Natural killer cell (primary cell): ENCODE measurements at regions of chr6 and their contacts with region 1.

Region 1: GRCh38 chr6:116570856-116571682 is at the start of gene RWDD1:
- DNase-seq: peak; percentile 96 to 99
- ATAC-seq: peak; percentile 91 to 99 (median 92)
- H3K4me3 ChIP-seq: peak within 1 kb of the TSS; percentile 66
- H3K4me3 Mint-ChIP-seq: peak within 1 kb of the TSS; percentile 98
- H3K27ac ChIP-seq: peak within 1 kb of the TSS; percentile 88
- H3K27ac Mint-ChIP-seq: peak within 1 kb of the TSS; percentile 99
- H3K4me1 ChIP-seq: peaks cover 4% of the 10 kb centered on the region
- H3K4me1 Mint-ChIP-seq: peaks cover 43 to 44% of the 10 kb centered on the region in 2 donors
- H3K27me3 ChIP-seq: no peaks in the 10 kb centered on the region
- H3K27me3 Mint-ChIP-seq: peaks cover 5 to 10% of the 10 kb centered on the region in 2 donors
- CTCF ChIP-seq: no peak
- total RNA-seq, gene RWDD1: 47.0 to 48.9 (median 47.1) TPM

Region 2: DNA sequence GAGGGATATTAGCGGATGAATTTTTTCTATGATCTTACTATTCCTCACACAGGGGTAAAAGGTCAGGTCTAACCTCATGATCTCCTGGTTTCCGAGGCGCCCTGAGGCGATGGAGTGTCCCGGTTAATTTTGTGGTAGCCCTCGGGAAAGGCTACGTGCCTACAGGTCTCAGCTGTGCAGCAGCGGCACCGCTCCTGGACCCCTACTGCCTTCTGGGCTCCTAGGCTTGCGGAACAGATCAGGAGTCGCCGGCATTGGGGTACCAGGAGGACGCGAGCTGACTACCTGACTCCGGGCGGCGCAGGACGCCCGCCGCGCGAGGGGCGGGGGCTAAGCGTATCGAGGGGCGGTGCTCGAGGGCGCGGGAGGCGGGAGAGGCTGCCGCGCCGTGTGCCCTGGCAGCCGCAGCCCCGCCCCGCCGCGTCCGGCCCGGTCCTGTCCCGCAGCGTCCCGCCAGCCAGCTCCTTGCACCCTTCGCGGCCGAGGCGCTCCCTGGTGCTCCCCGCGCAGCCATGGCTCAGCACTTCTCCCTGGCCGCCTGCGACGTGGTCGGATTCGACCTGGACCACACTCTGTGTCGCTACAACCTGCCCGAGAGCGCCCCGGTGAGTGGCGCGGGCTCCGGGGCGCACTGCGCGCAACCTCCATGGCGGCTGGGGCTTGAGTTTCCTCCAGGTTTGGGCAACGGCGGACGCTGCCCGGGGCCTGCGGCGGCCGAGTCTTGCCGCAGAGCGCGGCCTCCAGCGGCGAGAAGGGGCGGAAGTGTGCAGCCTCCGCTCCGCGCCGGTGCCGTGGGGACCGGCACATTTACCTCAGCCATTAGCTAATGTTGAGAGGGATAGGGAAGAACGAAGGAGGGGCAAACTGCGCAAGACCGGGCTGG is 470.4 kb before region 1 on chr6 and contains the start of gene NT5DC1:
- intact Hi-C with region 1: loop called (anchors 2 kb)
- DNase-seq: peak; percentile 79 to 90
- ATAC-seq: peak; percentile 90 to 95 (median 91)
- H3K4me3 ChIP-seq: peak within 1 kb of the TSS; percentile 64
- H3K4me3 Mint-ChIP-seq: peak within 1 kb of the TSS; percentile 92
- H3K27ac ChIP-seq: peak within 1 kb of the TSS; percentile 81
- H3K27ac Mint-ChIP-seq: peak within 1 kb of the TSS; percentile 76 to 89
- H3K4me1 ChIP-seq: peaks cover 19% of the 10 kb centered on the region
- H3K4me1 Mint-ChIP-seq: peaks cover 31 to 47% of the 10 kb centered on the region in 2 donors
- H3K27me3 ChIP-seq: no peaks in the 10 kb centered on the region
- H3K27me3 Mint-ChIP-seq: no peaks in the 10 kb centered on the region
- CTCF ChIP-seq: peak; percentile 44
- total RNA-seq, gene NT5DC1: 19.1 to 29.4 (median 20.5) TPM

Region 3: GRCh38 chr6:116253505-116254296 is 317.4 kb before region 1 on chr6 and contains the start of gene TSPYL4:
- intact Hi-C with region 1: loop called (anchors 1 kb)
- DNase-seq: peak; percentile 88 to 98
- ATAC-seq: peak; percentile 97 to 99 (median 97)
- H3K4me3 ChIP-seq: peak within 1 kb of the TSS; percentile 94
- H3K4me3 Mint-ChIP-seq: no peak within 1 kb of the TSS
- H3K27ac ChIP-seq: peak within 1 kb of the TSS; percentile 91
- H3K27ac Mint-ChIP-seq: no peak within 1 kb of the TSS
- H3K4me1 ChIP-seq: peaks cover 21% of the 10 kb centered on the region
- H3K4me1 Mint-ChIP-seq: no peaks in the 10 kb centered on the region
- H3K27me3 ChIP-seq: no peaks in the 10 kb centered on the region
- H3K27me3 Mint-ChIP-seq: no peaks in the 10 kb centered on the region
- CTCF ChIP-seq: no peak
- total RNA-seq, gene TSPYL4: 21.5 to 36.8 (median 26.5) TPM

Region 4: DNA sequence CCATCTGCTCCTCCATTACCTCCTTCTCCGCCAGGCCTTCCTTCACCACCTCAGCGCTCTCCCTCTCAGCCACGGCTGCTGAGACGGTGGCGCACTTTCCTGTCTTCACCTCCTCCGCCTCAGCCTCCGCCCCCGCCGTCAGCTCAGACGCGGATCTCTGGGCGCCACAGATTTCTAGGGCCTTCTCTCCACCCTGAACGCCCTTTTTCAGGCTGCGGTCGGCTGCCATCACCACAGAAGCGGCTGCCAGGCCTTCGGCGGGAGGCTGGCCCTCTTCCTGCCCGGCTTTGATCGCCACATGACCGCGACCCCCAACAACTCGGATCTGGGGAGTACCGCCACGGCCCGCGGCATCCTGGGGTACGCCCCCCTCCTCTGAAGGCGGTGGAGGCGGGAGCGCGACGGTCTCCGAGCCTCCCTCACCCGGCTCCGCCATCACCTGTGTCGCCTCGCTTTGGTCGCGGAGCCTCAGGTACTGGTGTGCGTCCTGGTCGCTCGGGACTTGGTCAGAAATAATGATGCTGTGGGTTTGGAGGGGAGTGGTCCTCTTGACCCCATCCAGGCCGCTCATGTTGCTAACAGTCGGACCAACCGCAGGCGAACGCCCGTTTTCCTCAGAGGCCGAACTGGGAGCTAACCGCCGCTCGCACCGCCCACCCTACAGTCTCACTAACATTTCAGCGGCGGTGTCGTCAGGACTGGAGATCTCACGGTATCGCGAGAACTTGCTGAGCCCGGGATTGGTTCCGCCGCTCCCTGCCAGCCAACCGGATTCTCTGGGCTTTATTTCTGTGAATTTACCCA is 291.6 kb before region 1 on chr6 and contains the start of gene TSPYL1:
- intact Hi-C with region 1: loop called (anchors 2 kb)
- DNase-seq: peak; percentile 91 to 98
- ATAC-seq: peak; percentile 88 to 95 (median 89)
- H3K4me3 ChIP-seq: peak within 1 kb of the TSS; percentile 92
- H3K4me3 Mint-ChIP-seq: peak within 1 kb of the TSS; percentile 96
- H3K27ac ChIP-seq: peak within 1 kb of the TSS; percentile 99
- H3K27ac Mint-ChIP-seq: peak within 1 kb of the TSS; percentile 98 to 100
- H3K4me1 ChIP-seq: peaks cover 26% of the 10 kb centered on the region
- H3K4me1 Mint-ChIP-seq: peaks cover 56 to 57% of the 10 kb centered on the region in 2 donors
- H3K27me3 ChIP-seq: no peaks in the 10 kb centered on the region
- H3K27me3 Mint-ChIP-seq: no peaks in the 10 kb centered on the region
- CTCF ChIP-seq: no peak
- total RNA-seq, gene TSPYL1: 134 to 143 (median 142) TPM

Region 5: DNA sequence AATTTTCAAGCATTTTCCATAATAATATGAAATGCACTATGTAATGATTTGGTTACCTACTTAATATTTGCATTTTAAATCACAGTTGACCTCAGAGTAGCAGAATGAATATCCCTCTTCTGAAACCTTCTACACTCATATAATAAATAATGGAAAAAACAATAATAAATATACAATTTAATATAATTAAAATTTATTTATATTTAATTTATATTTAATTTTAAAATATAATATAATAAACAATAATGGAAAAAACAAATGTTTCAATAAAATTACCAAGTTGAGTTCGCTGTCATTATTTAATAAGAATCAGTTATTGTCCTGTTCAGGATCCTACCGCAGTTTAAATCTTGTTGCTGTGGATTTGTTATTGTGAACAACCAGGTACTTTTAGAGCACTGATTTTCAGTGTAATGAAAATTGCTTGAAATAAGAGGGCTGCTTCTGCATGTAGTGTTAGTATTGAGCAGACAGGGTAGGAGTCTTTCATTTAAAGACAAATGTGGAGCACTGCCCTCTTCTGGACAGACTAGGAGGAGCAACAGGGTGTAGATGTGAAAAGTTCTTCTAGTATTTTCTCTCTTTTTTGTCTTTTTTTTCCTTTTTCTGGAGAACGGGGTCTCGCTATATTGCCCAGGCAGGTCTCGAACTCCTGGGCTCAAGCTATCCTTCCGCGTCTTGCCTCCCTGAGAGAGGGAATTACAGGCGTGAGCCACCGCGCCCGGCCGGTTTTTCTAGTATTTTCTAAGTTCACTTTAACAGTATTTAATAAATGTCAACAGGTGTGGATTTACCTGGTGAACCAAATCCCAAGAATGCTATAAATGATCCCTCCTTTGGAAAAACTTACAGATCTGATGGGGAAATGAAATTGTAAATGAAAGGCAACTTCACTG is 39.1 kb before region 1 on chr6:
- intact Hi-C with region 1: loop called (anchors 1 kb)
- DNase-seq: peak; percentile 30 to 82
- ATAC-seq: peak; percentile 95 to 97 (median 97)
- H3K4me3 ChIP-seq: no peak overlapping the region
- H3K4me3 Mint-ChIP-seq: no peak overlapping the region
- H3K27ac ChIP-seq: no peak overlapping the region
- H3K27ac Mint-ChIP-seq: no peak overlapping the region
- H3K4me1 ChIP-seq: no peaks in the 10 kb centered on the region
- H3K4me1 Mint-ChIP-seq: no peaks in the 10 kb centered on the region
- H3K27me3 ChIP-seq: no peaks in the 10 kb centered on the region
- H3K27me3 Mint-ChIP-seq: peaks cover 21 to 42% of the 10 kb centered on the region in 2 donors
- CTCF ChIP-seq: peak; percentile 95

Region 6: GRCh38 chr6:116667623-116668022 is 96.6 kb after region 1 on chr6:
- intact Hi-C with region 1: loop called (anchors 5 kb)
- DNase-seq: peak in 1 of 2 donors; percentile 10
- ATAC-seq: no peak
- H3K4me3 ChIP-seq: peak overlapping the region; percentile 73
- H3K4me3 Mint-ChIP-seq: peak overlapping the region; percentile 97
- H3K27ac ChIP-seq: no peak overlapping the region
- H3K27ac Mint-ChIP-seq: peak overlapping the region; percentile 94 to 97
- H3K4me1 ChIP-seq: peaks cover 11% of the 10 kb centered on the region
- H3K4me1 Mint-ChIP-seq: peaks cover 31% of the 10 kb centered on the region in 2 donors
- H3K27me3 ChIP-seq: no peaks in the 10 kb centered on the region
- H3K27me3 Mint-ChIP-seq: peaks cover 11 to 18% of the 10 kb centered on the region in 2 donors
- CTCF ChIP-seq: no peak

Region 7: DNA sequence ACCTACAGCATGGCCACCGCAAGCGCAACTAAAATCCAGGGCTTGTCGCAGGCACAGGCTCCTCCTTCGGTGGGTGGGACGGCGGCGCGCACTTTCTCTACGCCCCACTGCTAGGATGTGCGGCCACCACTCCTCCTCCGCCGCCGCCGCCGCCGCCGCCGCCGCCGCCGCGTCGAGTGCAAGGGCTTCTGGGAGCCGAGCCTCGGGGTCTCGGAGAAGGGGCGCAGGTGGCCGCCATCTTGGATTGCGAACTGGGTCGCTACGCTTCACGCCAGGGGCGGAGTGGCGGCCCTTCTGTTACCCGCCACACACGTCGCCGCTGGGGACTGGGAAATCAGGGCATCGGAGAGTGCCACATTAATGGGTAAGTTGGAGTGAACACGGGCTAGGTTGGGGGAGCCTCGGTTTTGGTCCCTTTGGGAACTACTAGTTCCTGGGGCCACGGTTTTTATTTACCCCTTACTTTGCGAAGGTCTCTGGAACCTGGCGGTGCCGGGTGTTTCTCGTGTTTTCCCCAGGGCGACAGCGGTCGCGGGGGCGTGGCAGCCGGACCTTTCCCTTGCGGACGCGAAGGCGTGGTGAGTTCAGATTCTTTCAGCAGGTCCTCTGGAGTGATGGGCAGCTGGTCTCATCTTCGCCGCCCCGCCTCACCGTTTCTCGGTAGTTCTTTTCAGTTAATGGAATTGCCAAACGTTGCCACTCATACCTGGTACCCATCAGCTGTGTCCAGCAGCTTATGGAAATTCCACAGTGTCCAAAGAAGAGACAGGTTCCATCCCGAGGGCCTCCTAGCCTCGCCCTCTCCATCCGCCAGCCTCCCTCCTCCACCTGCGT is 110.1 kb after region 1 on chr6 and contains the start of gene KPNA5:
- intact Hi-C with region 1: loop called (anchors 2 kb)
- DNase-seq: peak; percentile 81 to 94
- ATAC-seq: peak; percentile 91 to 97 (median 93)
- H3K4me3 ChIP-seq: peak within 1 kb of the TSS; percentile 78
- H3K4me3 Mint-ChIP-seq: peak within 1 kb of the TSS; percentile 99
- H3K27ac ChIP-seq: peak within 1 kb of the TSS; percentile 87
- H3K27ac Mint-ChIP-seq: peak within 1 kb of the TSS; percentile 94 to 100
- H3K4me1 ChIP-seq: peaks cover 17% of the 10 kb centered on the region
- H3K4me1 Mint-ChIP-seq: peaks cover 29 to 39% of the 10 kb centered on the region in 2 donors
- H3K27me3 ChIP-seq: no peaks in the 10 kb centered on the region
- H3K27me3 Mint-ChIP-seq: no peaks in the 10 kb centered on the region
- CTCF ChIP-seq: no peak
- total RNA-seq, gene KPNA5: 28.6 to 31.4 (median 29.1) TPM